Common myeloid progenitor, CD34-positive (primary cell): ENCODE measurements at regions of chr12 and their contacts with region 1.

Region 1: GRCh38 chr12:128820723-128821432 is 2.9 kb downstream of the SLC15A4 start:
- DNase-seq: peak; percentile 48 to 85 (median 73)
- H3K4me3 ChIP-seq: peak overlapping the region in 1 of 7 experiments; percentile 7
- H3K27ac ChIP-seq: no peak overlapping the region
- H3K4me1 ChIP-seq: peaks cover 15 to 62% (median 53%) of the 10 kb centered on the region in 4 experiments
- H3K27me3 ChIP-seq: no peaks in the 10 kb centered on the region

Region 2: DNA sequence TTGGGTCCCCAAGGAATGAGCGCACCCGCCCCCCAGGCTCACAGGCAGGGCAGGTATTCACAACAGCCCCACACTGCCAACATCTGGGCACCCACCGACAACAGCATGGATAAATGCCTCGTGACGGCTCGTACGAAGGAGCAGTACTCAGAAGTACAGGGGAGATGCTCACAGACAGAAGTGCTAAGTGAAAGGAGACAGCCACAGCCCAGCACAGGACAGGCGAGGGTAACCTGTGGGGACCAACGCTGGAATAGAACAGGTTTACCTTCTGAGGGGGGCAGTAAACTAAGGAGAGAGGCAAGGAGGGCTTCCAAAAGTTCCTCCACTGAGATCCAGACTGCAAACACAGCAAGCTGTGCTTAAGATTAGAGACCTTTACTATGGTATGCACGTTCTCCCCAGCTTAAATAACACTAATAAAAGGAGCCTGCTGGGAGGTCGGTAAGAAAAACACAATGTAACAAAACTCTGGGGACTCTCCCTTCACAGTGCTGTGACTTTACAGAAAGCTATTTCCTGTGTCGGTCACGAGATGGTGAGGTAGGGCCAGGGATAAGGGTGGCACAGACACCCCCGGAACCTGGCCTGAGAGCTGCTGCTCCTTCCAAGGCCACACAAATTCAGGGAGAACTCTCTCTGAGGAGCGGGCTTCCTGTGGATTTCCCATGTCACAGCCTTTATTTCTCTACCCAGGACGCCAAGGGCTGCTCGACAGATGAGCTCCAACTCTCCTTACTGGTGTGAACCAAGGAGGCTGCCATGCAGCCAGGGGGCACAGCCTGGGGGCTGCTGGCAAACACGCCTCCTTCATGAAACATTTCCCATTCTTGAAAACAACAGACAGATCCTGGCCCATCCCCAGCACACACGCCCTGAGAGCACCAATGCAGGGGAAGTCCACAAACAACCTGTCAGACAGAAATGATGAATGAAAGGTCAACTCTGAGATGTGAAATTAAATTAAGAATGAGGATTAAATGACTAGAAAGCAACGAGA is 23.5 kb before region 1 on chr12:
- CTCF ChIA-PET with region 1: interaction called, 12 read pairs
- POLR2A ChIA-PET with region 1: no interaction called
- DNase-seq: peak in 2 of 3 donors; percentile 52 to 65
- H3K4me3 ChIP-seq: no peak overlapping the region
- H3K27ac ChIP-seq: peak overlapping the region in 1 of 2 experiments; percentile 20
- H3K4me1 ChIP-seq: peaks cover 6 to 46% (median 35%) of the 10 kb centered on the region in 4 experiments
- H3K27me3 ChIP-seq: no peaks in the 10 kb centered on the region